H1 (cell line): ENCODE measurements at regions of chr16 and their contacts with region 1.

Region 1: DNA sequence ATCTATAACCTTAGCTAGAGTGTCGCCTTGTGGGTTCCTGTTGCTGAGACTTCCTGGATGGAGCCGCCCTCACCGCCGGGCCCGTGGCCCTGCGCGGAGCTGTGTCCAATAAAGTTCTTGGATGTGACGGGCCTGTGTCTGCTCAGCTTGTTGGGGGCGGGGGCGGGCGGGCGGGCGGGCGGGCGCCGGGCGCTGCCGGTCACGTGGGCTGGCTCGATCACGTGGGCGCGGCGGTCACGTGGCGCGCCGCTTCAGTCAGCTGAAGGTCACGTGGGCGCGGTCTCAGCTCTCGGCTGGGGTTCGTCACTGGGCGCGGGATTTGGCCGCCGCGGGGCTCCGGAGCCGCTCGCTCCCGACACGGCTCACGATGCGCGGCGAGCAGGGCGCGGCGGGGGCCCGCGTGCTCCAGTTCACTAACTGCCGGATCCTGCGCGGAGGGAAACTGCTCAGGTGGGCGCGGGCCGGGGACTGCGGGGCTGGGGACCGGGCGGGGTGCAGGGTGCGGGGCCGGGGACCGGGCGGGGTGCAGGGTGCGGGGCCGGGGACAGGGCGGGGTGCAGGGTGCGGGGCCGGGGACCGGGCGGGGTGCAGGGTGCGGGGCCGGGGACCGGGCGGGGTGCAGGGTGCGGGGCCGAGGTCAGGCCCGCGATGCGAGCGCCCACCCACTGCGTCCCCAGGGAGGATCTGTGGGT is at the start of gene AMDHD2:
- DNase-seq: peak in 1 of 2 experiments; percentile 92
- H3K4me3 ChIP-seq: peak within 1 kb of the TSS; percentile 45 to 87 (median 80)
- H3K27ac ChIP-seq: no peak within 1 kb of the TSS
- H3K4me1 ChIP-seq: peaks cover 0 to 16% (median 2%) of the 10 kb centered on the region in 4 experiments; a peak in 5 of 7 replicates
- H3K27me3 ChIP-seq: no peaks in the 10 kb centered on the region
- CTCF ChIP-seq: no peak
- EP300 ChIP-seq: peak in 1 of 2 experiments; percentile 85; a peak in 1 of 3 replicates
- POLR2A ChIP-seq: peak; percentile 60 to 81; a peak in 2 of 3 replicates
- RAD21 ChIP-seq: peak in 1 of 2 experiments; percentile 18; a peak in 1 of 4 replicates
- total RNA-seq, gene AMDHD2: 43.0 and 45.0 TPM in 2 replicates

Region 2: GRCh38 chr16:2537453-2538379 is 17.5 kb after region 1 on chr16 and contains the start of gene PDPK1:
- CTCF ChIA-PET with region 1: interaction called, 3 read pairs
- POLR2A ChIA-PET with region 1: interaction called, 108 read pairs
- DNase-seq: peak; percentile 75 to 88
- H3K4me3 ChIP-seq: peak within 1 kb of the TSS; percentile 47 to 77 (median 59)
- H3K27ac ChIP-seq: peak within 1 kb of the TSS; percentile 63; the same call in 1 of the 2 replicates
- H3K4me1 ChIP-seq: peaks cover 0 to 2% (median 0%) of the 10 kb centered on the region in 4 experiments; a peak in 2 of 7 replicates
- H3K27me3 ChIP-seq: no peaks in the 10 kb centered on the region
- CTCF ChIP-seq: no peak
- EP300 ChIP-seq: no peak
- POLR2A ChIP-seq: peak; percentile 56 to 57; a peak in 2 of 3 replicates
- RAD21 ChIP-seq: no peak
- total RNA-seq, gene PDPK1: 27.8 and 28.0 TPM in 2 replicates